ENCODE measurements at regions of chr6 and their contacts with region 1.

Region 1: DNA sequence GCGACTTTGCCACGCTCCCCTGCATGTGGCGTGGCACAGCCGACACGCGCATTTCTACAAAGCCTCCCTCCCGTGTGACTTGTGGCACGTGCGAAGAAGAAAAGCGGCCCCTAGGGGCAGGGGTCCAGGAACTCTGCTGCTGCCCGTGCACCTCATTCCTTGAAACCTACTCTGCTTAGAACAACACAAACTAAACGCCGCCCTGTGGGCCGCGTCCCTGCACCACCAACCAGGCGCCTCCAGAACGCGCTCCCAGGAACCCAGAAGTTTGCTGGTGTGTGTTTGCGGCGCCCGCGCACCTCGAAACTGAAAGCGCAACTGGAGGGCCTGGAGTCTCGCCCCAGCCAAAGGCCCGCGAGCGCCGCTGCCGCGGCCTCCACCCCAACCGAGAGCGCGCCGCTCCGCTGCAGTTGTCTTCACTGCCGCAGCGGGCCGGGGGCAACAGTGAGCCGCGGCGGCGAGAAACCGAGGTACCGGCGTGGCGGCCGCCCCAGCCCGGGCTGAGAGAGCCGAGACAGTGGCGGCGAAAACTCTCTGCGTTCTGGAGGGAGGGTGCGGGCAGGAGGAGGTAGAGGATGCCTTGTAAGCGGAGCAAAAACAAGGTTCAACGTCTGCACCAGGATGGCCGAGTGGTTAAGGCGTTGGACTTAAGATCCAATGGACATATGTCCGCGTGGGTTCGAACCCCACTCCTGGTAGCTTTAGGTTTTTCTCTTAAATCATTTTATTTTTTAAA is 65.8 kb downstream of the STX11 start:
- DNase-seq: peak; percentile 93 to 98
- H3K4me3 ChIP-seq: peak overlapping the region; percentile 65 to 80
- H3K27ac ChIP-seq: peak overlapping the region; percentile 86 to 92
- H3K4me1 ChIP-seq: peaks cover 0 to 19% (median 12%) of the 10 kb centered on the region in 4 donors
- H3K27me3 ChIP-seq: no peaks in the 10 kb centered on the region
- CTCF ChIP-seq: peak; percentile 80 to 85

Region 2: GRCh38 chr6:144408161-144408560 is 192.1 kb after region 1 on chr6:
- intact Hi-C with region 1: loop called (anchors 10 kb)
- DNase-seq: peak; percentile 28 to 72
- H3K4me3 ChIP-seq: no peak overlapping the region
- H3K27ac ChIP-seq: no peak overlapping the region
- H3K4me1 ChIP-seq: peaks cover 0 to 67% (median 14%) of the 10 kb centered on the region in 4 donors
- H3K27me3 ChIP-seq: no peaks in the 10 kb centered on the region
- CTCF ChIP-seq: no peak

Region 3: DNA sequence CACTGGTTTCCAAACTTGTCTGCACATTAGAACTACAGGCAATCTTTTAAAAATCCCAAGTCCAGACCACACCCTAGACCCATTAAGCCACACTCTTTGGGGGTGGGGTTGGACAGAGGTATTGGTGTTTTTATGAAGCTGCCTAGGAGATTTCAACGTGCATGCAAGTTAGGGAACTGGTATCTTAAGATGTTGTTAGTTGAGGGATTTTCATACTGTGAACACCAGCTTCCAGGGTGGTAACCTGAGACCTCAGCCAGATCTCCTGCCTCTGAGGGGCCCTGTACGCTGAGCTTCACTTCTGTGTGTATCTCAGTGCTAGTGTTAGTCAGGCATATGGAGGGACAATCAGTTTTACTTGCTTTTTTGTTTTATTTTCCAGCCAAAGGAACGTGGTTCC is 207.1 kb after region 1 on chr6:
- intact Hi-C with region 1: no loop called
- DNase-seq: no peak
- H3K4me3 ChIP-seq: no peak overlapping the region
- H3K27ac ChIP-seq: no peak overlapping the region
- H3K4me1 ChIP-seq: no peaks in the 10 kb centered on the region
- H3K27me3 ChIP-seq: no peaks in the 10 kb centered on the region
- CTCF ChIP-seq: no peak

Region 4: GRCh38 chr6:145660676-145661075 is 1444.6 kb after region 1 on chr6:
- intact Hi-C with region 1: no loop called
- DNase-seq: no peak
- H3K4me3 ChIP-seq: no peak overlapping the region
- H3K27ac ChIP-seq: no peak overlapping the region
- H3K4me1 ChIP-seq: peaks cover 0 to 7% (median 0%) of the 10 kb centered on the region in 4 donors
- H3K27me3 ChIP-seq: no peaks in the 10 kb centered on the region
- CTCF ChIP-seq: no peak